ENCODE measurements at regions of chr5 and their contacts with region 1.

Region 1: DNA sequence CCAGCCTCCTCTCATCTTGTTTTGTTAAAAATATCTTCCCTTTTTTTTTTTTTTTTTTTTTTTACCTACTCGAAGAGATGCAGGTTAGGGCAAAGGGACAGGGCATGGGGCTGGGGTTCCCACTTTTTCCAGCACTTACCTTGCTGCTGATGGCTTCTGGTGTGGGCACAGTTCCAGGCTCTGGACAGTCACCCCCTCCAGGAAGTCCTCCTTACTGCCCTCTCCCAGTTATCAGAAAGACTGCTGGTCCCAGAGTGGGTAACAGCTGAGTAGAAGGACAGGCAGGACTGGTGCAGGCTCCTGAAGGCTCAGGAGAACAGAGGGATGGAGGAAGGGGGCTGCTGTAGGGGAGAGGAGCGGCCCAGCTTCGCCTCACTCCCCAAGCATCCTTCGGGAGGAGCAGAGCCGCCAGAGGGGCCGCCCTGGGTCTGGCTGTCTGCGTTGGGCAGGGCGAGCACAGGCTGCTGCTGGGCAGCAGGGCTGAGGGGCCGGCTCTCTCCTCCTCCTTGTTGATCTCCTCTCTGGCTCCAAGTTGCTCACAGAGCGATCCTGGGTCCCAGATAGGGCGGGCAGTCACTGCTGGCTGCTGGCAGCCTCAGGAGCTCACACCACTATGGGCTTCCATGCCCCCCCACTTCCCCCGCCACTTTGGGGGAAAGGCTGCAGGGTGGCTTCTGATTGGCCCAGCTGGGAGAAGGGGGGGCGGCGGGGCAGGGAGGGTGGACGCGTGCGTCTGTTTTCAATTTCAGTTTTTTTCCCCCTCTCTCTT is at the start of gene PDGFRB:
- DNase-seq: peak; percentile 47
- H3K4me3 ChIP-seq: peak within 1 kb of the TSS; percentile 28 to 33
- H3K27ac ChIP-seq: peak within 1 kb of the TSS; percentile 71 to 73
- H3K4me1 ChIP-seq: no peaks in the 10 kb centered on the region
- H3K27me3 ChIP-seq: no peaks in the 10 kb centered on the region
- CTCF ChIP-seq: no peak
- POLR2A ChIP-seq: no peak
- total RNA-seq, gene PDGFRB: 14.5 to 161 TPM

Region 2: GRCh38 chr5:149298842-149299404 is 856.5 kb before region 1 on chr5:
- intact Hi-C with region 1: no loop called
- DNase-seq: no peak
- H3K4me3 ChIP-seq: no peak overlapping the region
- H3K27ac ChIP-seq: no peak overlapping the region
- H3K4me1 ChIP-seq: no peaks in the 10 kb centered on the region
- H3K27me3 ChIP-seq: no peaks in the 10 kb centered on the region
- CTCF ChIP-seq: no peak
- POLR2A ChIP-seq: no peak

Region 3: DNA sequence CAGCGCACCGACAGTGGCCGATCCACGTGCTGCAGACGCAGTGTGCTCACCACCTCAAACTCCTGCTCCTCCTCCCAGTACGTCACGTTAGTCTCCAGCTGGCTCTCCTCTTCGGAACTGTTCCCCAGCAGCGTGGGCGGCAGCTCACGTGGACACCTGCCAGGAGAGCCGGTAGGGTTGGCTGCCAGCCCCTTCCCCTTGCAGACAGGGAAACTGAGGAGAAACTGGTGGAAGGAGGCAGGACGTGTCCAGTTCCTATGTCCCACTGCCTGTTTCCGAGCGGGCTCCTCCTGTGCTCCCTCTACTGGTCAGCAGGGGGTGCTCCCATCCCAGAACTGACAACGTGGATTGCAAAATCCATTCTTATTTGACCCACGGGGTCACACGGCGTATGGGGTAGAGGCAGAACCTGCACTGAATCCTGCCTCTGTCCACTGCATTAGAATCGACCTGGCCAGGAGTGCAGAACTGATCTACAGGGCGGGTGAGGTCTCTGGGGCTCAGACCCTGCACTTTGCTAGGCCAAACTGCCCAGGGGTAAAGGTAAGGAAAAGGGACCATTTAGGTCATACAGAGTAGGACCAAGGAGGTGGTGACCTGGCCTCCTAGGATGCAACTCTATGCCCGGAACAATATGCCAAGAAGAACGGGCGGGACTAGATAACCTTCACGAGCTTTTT is 25.5 kb before region 1 on chr5:
- intact Hi-C with region 1: loop called (anchors 2 kb)
- DNase-seq: peak; percentile 47
- H3K4me3 ChIP-seq: no peak overlapping the region
- H3K27ac ChIP-seq: no peak overlapping the region
- H3K4me1 ChIP-seq: no peaks in the 10 kb centered on the region
- H3K27me3 ChIP-seq: no peaks in the 10 kb centered on the region
- CTCF ChIP-seq: peak; percentile 76 to 91 (median 90)
- POLR2A ChIP-seq: no peak

Region 4: GRCh38 chr5:150141544-150142190 is 13.8 kb before region 1 on chr5:
- intact Hi-C with region 1: loop called (anchors 2 kb)
- DNase-seq: no peak
- H3K4me3 ChIP-seq: no peak overlapping the region
- H3K27ac ChIP-seq: peak overlapping the region; percentile 60 to 71
- H3K4me1 ChIP-seq: peaks cover 23% of the 10 kb centered on the region
- H3K27me3 ChIP-seq: no peaks in the 10 kb centered on the region
- CTCF ChIP-seq: no peak
- POLR2A ChIP-seq: no peak

Measured in prostate gland (tissue), 2 donors.